PC-9 (cell line): ENCODE measurements at regions of chr2 and their contacts with region 1.

Region 1: GRCh38 chr2:235390103-235390812 is 103.6 kb upstream of the AGAP1 start:
- DNase-seq: peak in 1 of 2 experiments; percentile 67
- H3K4me3 ChIP-seq: no peak overlapping the region
- H3K27ac ChIP-seq: no peak overlapping the region
- H3K4me1 ChIP-seq: peaks cover 27% of the 10 kb centered on the region
- H3K27me3 ChIP-seq: no peaks in the 10 kb centered on the region
- CTCF ChIP-seq: no peak

Region 2: DNA sequence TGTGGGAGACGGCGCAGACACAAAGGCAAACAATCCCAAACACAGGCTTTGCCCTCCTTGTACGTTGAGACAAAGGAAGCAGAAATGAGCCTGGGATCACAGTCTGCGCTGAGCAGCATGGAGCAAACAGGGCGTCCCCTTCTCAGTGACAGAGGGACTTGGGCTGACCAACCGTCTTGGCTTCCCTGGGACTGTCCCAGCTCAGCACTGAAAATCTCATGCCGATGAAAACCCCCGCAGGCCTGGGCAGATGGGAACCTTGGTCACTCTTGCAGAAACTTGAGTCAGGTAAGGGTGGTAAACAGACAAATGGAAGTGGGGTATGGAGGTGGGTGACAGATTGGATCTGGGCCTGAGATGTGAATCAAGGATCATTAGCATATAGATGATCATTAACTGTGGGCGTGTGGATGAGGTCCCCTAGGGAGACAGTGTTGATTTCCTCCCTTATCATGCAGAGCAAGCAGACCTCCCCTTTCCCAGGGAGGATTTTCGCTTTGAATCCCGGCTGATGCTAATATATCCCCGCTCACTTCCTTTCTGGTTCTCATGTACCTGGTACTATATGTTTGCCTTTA is 457.6 kb before region 1 on chr2:
- CTCF ChIA-PET with region 1: no interaction called
- POLR2A ChIA-PET with region 1: no interaction called
- intact Hi-C with region 1: no loop called
- DNase-seq: no peak
- H3K4me3 ChIP-seq: no peak overlapping the region
- H3K27ac ChIP-seq: no peak overlapping the region
- H3K4me1 ChIP-seq: no peaks in the 10 kb centered on the region
- H3K27me3 ChIP-seq: no peaks in the 10 kb centered on the region
- CTCF ChIP-seq: no peak

Region 3: DNA sequence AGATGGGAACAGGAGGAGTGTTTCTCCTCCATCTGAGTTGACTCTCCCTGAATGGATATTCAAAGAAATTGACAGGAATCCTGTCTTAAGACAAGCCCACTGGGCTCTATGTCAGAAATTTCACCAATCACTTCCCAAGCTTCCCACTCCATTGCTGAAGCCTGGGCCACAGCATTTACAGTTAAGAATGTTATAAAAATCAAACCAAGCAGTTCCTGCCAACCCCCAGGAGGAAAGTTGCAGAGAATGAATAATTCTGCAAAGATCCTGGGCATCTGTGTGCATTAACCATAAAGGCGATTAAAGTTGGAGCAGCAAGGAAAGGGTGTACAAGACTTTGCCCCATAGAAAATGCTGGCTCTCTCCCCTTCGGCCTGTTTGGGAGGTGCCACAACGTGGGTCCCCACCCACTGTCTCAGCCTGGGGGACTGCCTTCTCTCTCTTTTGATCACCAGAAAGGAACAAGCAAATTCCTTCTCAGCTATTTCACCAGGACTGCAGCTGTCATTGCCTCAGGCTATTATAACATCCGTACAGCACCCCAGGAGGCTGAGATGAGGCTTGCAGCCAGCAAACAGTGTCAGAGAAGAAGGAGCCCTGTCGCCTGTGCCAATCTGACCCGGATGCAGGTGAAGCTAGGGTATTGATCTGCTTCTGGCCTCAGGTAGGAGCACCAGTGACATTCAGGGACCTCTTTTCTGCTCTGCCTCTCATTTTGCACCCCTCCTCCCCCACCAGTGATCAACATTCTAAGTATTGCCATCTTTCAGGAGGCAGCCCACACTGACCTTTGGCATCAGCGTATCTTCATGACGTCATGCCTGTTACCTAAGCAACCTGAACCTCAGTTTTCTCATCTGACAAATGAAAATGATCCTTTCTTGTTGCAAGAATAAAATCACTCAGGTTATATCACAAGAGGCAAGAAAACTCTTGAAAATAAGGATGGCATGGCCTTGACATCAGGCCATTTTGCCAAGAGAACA is 219.4 kb before region 1 on chr2:
- CTCF ChIA-PET with region 1: no interaction called
- POLR2A ChIA-PET with region 1: interaction called, 4 read pairs
- intact Hi-C with region 1: loop called (anchors 1 kb)
- DNase-seq: peak; percentile 89 to 99
- H3K4me3 ChIP-seq: peak overlapping the region; percentile 14; the same call in 1 of the 2 replicates
- H3K27ac ChIP-seq: peak overlapping the region; percentile 94
- H3K4me1 ChIP-seq: peaks cover 41% of the 10 kb centered on the region
- H3K27me3 ChIP-seq: no peaks in the 10 kb centered on the region
- CTCF ChIP-seq: peak; percentile 48

Region 4: DNA sequence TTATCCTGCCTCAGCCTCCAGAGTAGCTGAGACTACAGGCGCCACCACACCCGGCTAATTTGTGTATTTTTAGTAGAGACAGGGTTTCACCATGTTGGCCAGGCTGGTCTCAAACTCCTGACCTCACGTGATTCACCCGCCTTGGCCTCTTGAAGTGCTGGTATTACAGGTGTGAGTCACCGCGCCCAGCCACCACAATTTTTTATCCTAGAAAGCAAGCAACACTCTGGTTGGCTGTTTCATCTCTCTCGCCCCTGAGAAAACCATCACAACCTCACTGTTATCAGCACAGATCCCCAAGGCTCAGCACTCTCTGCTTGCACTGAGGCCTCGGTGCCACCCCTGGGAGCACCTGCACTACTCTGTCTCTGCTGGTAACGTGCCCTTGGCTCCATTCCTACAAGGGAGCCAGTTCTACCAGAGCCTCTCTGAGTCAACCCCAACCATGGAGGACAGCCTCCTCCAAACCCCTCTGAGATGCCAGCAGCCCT is 31.2 kb before region 1 on chr2:
- CTCF ChIA-PET with region 1: no interaction called
- POLR2A ChIA-PET with region 1: no interaction called
- intact Hi-C with region 1: loop called (anchors 1 kb)
- DNase-seq: peak; percentile 91 to 96
- H3K4me3 ChIP-seq: no peak overlapping the region
- H3K27ac ChIP-seq: peak overlapping the region; percentile 23; the same call in 1 of the 2 replicates
- H3K4me1 ChIP-seq: peaks cover 28% of the 10 kb centered on the region
- H3K27me3 ChIP-seq: no peaks in the 10 kb centered on the region
- CTCF ChIP-seq: no peak

Region 5: DNA sequence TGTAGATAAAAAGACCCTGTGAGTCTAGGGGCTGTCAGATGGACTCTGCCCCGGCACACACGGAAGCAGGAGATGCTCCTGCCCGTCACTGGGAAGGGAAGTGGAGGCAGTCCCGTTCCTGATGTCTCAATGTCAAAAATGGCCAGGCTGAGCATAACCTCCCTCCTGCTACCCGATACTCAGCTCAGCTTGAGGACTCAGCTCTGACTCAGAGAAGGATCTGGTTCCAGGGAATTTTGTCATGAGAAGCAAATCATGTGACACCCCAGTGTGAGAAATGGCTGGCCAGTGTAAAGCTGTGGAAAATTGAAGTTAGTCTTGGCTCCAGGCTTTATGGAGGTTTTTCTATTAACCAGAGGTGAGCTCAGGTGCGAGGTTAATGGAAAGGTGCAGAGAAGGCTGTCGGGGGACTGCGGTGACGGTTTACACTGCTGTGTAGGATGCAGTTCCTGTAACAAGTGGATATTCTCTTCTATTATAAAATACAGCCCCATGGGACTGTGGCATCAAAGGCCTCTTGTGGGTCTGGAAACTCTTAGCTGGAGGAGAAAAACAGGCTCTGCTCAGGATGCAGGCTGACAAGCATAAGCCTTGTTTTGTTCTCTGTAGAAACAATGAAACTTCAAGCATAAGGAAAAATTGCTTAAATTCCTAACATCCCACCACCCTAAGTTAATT is 78.9 kb after region 1 on chr2:
- CTCF ChIA-PET with region 1: no interaction called
- POLR2A ChIA-PET with region 1: no interaction called
- intact Hi-C with region 1: loop called (anchors 2 kb)
- DNase-seq: peak; percentile 63 to 93
- H3K4me3 ChIP-seq: peak overlapping the region; percentile 22; the same call in 1 of the 2 replicates
- H3K27ac ChIP-seq: peak overlapping the region; percentile 87
- H3K4me1 ChIP-seq: peaks cover 29% of the 10 kb centered on the region
- H3K27me3 ChIP-seq: no peaks in the 10 kb centered on the region
- CTCF ChIP-seq: no peak

Region 6: DNA sequence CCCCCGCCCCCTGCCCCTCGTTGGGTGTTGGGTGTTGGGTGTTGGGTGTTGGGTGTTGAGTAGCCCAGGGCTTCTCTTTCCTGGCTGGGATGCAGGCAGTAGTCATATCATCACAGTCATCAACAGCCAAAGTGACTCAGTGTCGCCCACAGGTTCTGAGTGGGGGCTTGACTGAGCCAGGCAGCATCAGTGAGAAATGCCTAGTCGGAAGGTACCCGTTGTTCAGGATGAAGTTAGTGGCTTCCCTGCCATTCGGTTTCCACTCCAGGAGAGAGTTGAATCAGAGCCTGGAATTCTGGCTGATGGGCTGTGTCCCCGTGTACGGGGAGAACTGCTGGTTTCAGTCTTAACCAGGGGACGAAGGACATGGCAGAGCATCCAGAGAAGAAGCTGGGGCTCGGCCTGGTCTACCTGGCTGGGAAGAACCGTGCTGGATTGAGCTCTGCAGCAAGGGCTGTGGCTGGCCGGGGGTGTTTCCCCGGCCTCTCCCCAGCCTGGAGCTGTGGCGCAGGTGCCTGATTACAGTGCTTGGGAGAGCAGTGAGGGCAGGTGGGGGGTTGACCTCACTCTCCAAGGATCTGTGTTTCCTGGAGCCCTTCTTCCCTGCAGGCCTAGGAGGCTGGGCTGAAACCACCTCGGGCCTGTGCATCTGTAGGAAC is 153.0 kb after region 1 on chr2:
- CTCF ChIA-PET with region 1: no interaction called
- POLR2A ChIA-PET with region 1: interaction called, 5 read pairs
- intact Hi-C with region 1: loop called (anchors 5 kb)
- DNase-seq: peak; percentile 71 to 79
- H3K4me3 ChIP-seq: peak overlapping the region; percentile 49; the same call in 1 of the 2 replicates
- H3K27ac ChIP-seq: peak overlapping the region; percentile 91
- H3K4me1 ChIP-seq: peaks cover 58% of the 10 kb centered on the region
- H3K27me3 ChIP-seq: no peaks in the 10 kb centered on the region
- CTCF ChIP-seq: no peak